ENCODE measurements at regions of chr3 and their contacts with region 1.

Region 1: GRCh38 chr3:30693470-30694120 is 87.2 kb downstream of the TGFBR2 start:
- DNase-seq: peak in 7 of 9 donors; percentile 63 to 79 (median 72)
- ATAC-seq: peak; percentile 94
- H3K4me3 ChIP-seq: no peak overlapping the region
- H3K4me3 Mint-ChIP-seq: peak overlapping the region in 3 of 10 donors; percentile 15 to 49 (median 37)
- H3K27ac ChIP-seq: no peak overlapping the region
- H3K27ac Mint-ChIP-seq: peak overlapping the region in 8 of 9 donors; percentile 33 to 98 (median 86)
- H3K4me1 ChIP-seq: peaks cover 11 to 30% of the 10 kb centered on the region in 2 donors
- H3K4me1 Mint-ChIP-seq: peaks cover 25 to 94% (median 85%) of the 10 kb centered on the region in 7 donors
- H3K27me3 ChIP-seq: no peaks in the 10 kb centered on the region
- H3K27me3 Mint-ChIP-seq: no peaks in the 10 kb centered on the region

Region 2: DNA sequence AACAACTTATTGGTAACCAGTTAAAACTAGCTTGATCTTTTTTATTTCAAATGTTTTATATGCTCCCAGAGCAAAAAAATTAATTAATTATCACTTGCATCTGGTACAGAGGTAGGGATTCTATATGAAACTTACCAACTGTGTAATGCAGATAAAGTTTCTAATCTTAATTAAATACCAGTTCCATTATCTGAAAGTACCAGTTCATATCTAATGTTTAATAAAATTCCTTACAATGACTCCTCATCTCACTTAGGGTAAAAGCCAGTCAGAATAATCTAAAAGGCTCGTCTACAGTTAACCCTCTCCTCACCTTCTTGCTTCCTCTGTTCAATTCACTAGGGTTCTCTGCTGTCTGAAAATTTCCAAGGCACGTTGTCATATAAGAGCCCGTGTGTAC is 1027.9 kb before region 1 on chr3:
- CTCF ChIA-PET with region 1: no interaction called
- POLR2A ChIA-PET with region 1: no interaction called
- intact Hi-C with region 1: no loop called
- DNase-seq: no peak
- ATAC-seq: no peak
- H3K4me3 ChIP-seq: no peak overlapping the region
- H3K4me3 Mint-ChIP-seq: no peak overlapping the region
- H3K27ac ChIP-seq: no peak overlapping the region
- H3K27ac Mint-ChIP-seq: no peak overlapping the region
- H3K4me1 ChIP-seq: no peaks in the 10 kb centered on the region
- H3K4me1 Mint-ChIP-seq: no peaks in the 10 kb centered on the region
- H3K27me3 ChIP-seq: no peaks in the 10 kb centered on the region
- H3K27me3 Mint-ChIP-seq: peaks cover 0 to 9% (median 3%) of the 10 kb centered on the region in 5 donors

Region 3: GRCh38 chr3:30073622-30074021 is 620.0 kb before region 1 on chr3:
- CTCF ChIA-PET with region 1: no interaction called
- POLR2A ChIA-PET with region 1: no interaction called
- intact Hi-C with region 1: no loop called
- DNase-seq: no peak
- ATAC-seq: no peak
- H3K4me3 ChIP-seq: no peak overlapping the region
- H3K4me3 Mint-ChIP-seq: no peak overlapping the region
- H3K27ac ChIP-seq: no peak overlapping the region
- H3K27ac Mint-ChIP-seq: no peak overlapping the region
- H3K4me1 ChIP-seq: no peaks in the 10 kb centered on the region
- H3K4me1 Mint-ChIP-seq: no peaks in the 10 kb centered on the region
- H3K27me3 ChIP-seq: no peaks in the 10 kb centered on the region
- H3K27me3 Mint-ChIP-seq: no peaks in the 10 kb centered on the region

Region 4: DNA sequence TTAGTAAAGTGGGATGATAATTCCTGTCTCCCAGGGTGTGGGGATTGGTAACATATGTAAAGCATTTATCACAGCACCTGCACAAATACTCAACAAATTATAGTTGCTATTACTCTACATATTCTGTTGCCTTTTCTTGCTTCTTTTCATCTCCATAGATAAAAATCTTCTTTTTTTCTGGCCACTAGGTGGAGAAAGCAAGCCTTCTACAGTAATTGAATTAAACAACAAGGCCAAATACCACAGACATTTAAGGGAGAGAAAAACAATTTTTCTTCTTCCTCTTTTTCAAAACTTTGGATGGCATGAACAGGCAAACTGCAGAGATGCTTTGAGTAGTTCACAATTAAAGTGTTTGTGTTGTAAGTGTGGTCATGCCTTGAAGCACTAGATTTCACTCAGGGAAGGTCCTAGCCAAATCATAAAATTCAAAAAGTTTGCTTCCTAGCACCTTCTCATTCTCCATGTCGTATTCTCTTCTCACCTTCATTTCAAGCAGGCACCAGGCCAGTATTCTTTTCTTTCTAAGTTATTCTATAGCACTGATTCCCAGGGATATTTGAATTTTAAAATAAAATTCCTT is 580.6 kb before region 1 on chr3:
- CTCF ChIA-PET with region 1: interaction called, 13 read pairs
- POLR2A ChIA-PET with region 1: interaction called, 3 read pairs
- intact Hi-C with region 1: loop called (anchors 1 kb)
- DNase-seq: peak in 7 of 9 donors; percentile 17 to 68 (median 55)
- ATAC-seq: peak; percentile 61
- H3K4me3 ChIP-seq: no peak overlapping the region
- H3K4me3 Mint-ChIP-seq: no peak overlapping the region
- H3K27ac ChIP-seq: no peak overlapping the region
- H3K27ac Mint-ChIP-seq: no peak overlapping the region
- H3K4me1 ChIP-seq: no peaks in the 10 kb centered on the region
- H3K4me1 Mint-ChIP-seq: peaks cover 4 to 8% (median 6%) of the 10 kb centered on the region in 7 donors
- H3K27me3 ChIP-seq: no peaks in the 10 kb centered on the region
- H3K27me3 Mint-ChIP-seq: peaks cover 0 to 16% (median 9%) of the 10 kb centered on the region in 5 donors

Region 5: GRCh38 chr3:30353711-30354467 is 339.7 kb before region 1 on chr3:
- CTCF ChIA-PET with region 1: no interaction called
- POLR2A ChIA-PET with region 1: interaction called, 4 read pairs
- intact Hi-C with region 1: loop called in 1 of 2 experiments (anchors 2 kb)
- DNase-seq: peak; percentile 5 to 94 (median 87)
- ATAC-seq: peak; percentile 99
- H3K4me3 ChIP-seq: peak overlapping the region; percentile 36
- H3K4me3 Mint-ChIP-seq: peak overlapping the region; percentile 65 to 81 (median 68)
- H3K27ac ChIP-seq: no peak overlapping the region
- H3K27ac Mint-ChIP-seq: peak overlapping the region; percentile 23 to 96 (median 90)
- H3K4me1 ChIP-seq: peaks cover 38 to 66% of the 10 kb centered on the region in 2 donors
- H3K4me1 Mint-ChIP-seq: peaks cover 50 to 96% (median 88%) of the 10 kb centered on the region in 7 donors
- H3K27me3 ChIP-seq: no peaks in the 10 kb centered on the region
- H3K27me3 Mint-ChIP-seq: peaks cover 0 to 50% (median 0%) of the 10 kb centered on the region in 5 donors

Region 6: DNA sequence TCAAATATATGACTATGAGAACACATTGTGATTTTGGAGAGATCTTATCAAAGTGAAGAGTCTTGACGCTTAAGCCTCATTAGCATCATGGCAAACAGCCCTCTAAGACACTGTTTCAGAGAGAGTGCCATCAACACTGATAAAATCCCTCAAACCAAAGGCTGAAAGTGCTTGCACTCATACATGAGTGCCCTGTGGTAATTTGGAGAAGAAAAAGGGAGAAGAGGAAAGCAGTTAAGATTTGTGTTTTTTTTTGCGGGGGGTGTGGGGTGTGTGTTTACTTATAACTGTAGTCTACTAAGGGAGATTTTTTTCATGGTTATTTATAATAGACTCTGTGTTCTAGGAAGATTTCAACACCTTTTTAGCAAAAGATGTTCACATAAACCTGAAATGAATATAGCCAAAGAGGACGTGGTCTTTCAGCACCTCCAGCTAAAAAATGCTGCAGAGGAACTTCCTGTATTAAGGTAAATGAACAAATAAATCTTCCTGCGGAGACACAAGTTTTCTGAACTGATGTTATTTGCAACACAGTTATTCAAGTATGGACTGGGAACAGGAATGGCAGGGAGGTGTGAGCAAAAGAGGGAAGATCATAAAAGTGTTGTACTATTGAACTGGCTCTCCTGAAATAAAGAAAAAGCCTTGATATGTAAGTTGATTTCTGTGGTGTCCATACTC is 169.1 kb before region 1 on chr3:
- CTCF ChIA-PET with region 1: interaction called, 3 read pairs
- POLR2A ChIA-PET with region 1: no interaction called
- intact Hi-C with region 1: loop called in 1 of 2 experiments (anchors 2 kb)
- DNase-seq: peak in 1 of 9 donors; percentile 4
- ATAC-seq: peak; percentile 41
- H3K4me3 ChIP-seq: no peak overlapping the region
- H3K4me3 Mint-ChIP-seq: peak overlapping the region in 9 of 10 donors; percentile 4 to 66 (median 48)
- H3K27ac ChIP-seq: no peak overlapping the region
- H3K27ac Mint-ChIP-seq: peak overlapping the region in 5 of 9 donors; percentile 0 to 63 (median 16)
- H3K4me1 ChIP-seq: no peaks in the 10 kb centered on the region
- H3K4me1 Mint-ChIP-seq: peaks cover 8 to 27% (median 23%) of the 10 kb centered on the region in 7 donors
- H3K27me3 ChIP-seq: no peaks in the 10 kb centered on the region
- H3K27me3 Mint-ChIP-seq: peaks cover 0 to 3% (median 0%) of the 10 kb centered on the region in 5 donors

Region 7: DNA sequence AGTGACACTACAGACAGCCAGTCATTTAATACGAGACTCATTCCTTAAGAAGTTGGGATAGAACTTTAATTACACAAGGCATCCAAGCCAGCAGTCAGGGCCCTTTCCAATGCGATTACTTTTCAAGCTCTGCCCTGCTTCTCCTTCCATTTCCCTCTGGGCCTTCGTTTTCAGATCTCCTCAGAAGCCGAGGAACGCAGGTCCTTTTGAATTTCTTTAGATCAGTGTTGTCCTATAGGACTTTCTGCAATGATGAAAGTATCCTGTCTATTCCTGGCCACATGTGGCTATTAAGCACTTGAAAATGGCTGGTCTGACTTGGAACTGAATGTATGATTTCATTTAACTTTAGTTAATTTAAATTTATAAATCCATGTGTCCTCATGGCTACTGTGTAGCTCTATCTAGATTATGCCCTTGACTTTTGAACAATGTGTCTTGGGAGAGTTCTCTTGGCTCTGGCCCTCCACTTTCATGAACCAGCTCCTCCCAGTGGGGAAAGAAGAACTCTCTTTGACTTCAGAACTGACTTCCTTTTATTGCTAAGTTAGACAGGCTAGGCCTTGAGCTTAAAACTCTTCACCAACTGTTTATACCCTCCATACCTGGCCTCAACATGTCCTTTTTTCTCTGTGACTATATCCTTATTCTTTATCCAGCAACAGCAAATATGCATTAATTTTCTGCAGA is 64.5 kb before region 1 on chr3:
- CTCF ChIA-PET with region 1: interaction called, 19 read pairs
- POLR2A ChIA-PET with region 1: no interaction called
- intact Hi-C with region 1: loop called (anchors 1 to 2 kb)
- DNase-seq: peak in 2 of 9 donors; percentile 53 to 55
- ATAC-seq: peak; percentile 51
- H3K4me3 ChIP-seq: peak overlapping the region; percentile 29
- H3K4me3 Mint-ChIP-seq: peak overlapping the region; percentile 53 to 88 (median 72)
- H3K27ac ChIP-seq: peak overlapping the region; percentile 68
- H3K27ac Mint-ChIP-seq: peak overlapping the region; percentile 84 to 98 (median 96)
- H3K4me1 ChIP-seq: peaks cover 81 to 97% of the 10 kb centered on the region in 2 donors
- H3K4me1 Mint-ChIP-seq: peaks cover 64 to 100% (median 93%) of the 10 kb centered on the region in 7 donors
- H3K27me3 ChIP-seq: no peaks in the 10 kb centered on the region
- H3K27me3 Mint-ChIP-seq: no peaks in the 10 kb centered on the region

Region 8: GRCh38 chr3:30681643-30682211 is 11.9 kb before region 1 on chr3:
- CTCF ChIA-PET with region 1: interaction called, 12 read pairs
- POLR2A ChIA-PET with region 1: interaction called, 11 read pairs
- intact Hi-C with region 1: loop called (anchors 1 kb)
- DNase-seq: peak in 2 of 9 donors; percentile 25 to 26
- ATAC-seq: peak; percentile 51
- H3K4me3 ChIP-seq: no peak overlapping the region
- H3K4me3 Mint-ChIP-seq: peak overlapping the region; percentile 39 to 88 (median 78)
- H3K27ac ChIP-seq: peak overlapping the region; percentile 52
- H3K27ac Mint-ChIP-seq: peak overlapping the region; percentile 62 to 98 (median 93)
- H3K4me1 ChIP-seq: peaks cover 32 to 84% of the 10 kb centered on the region in 2 donors
- H3K4me1 Mint-ChIP-seq: peaks cover 61 to 100% (median 93%) of the 10 kb centered on the region in 7 donors
- H3K27me3 ChIP-seq: no peaks in the 10 kb centered on the region
- H3K27me3 Mint-ChIP-seq: no peaks in the 10 kb centered on the region

Region 9: GRCh38 chr3:30768703-30769685 is 75.4 kb after region 1 on chr3:
- CTCF ChIA-PET with region 1: no interaction called
- POLR2A ChIA-PET with region 1: no interaction called
- intact Hi-C with region 1: no loop called
- DNase-seq: peak; percentile 39 to 69 (median 62)
- ATAC-seq: peak; percentile 48
- H3K4me3 ChIP-seq: no peak overlapping the region
- H3K4me3 Mint-ChIP-seq: peak overlapping the region in 1 of 10 donors; percentile 35
- H3K27ac ChIP-seq: no peak overlapping the region
- H3K27ac Mint-ChIP-seq: no peak overlapping the region
- H3K4me1 ChIP-seq: no peaks in the 10 kb centered on the region
- H3K4me1 Mint-ChIP-seq: peaks cover 0 to 7% (median 0%) of the 10 kb centered on the region in 7 donors
- H3K27me3 ChIP-seq: no peaks in the 10 kb centered on the region
- H3K27me3 Mint-ChIP-seq: peaks cover 0 to 32% (median 3%) of the 10 kb centered on the region in 5 donors

Region 10: GRCh38 chr3:32194653-32195052 is 1501.1 kb after region 1 on chr3:
- CTCF ChIA-PET with region 1: no interaction called
- POLR2A ChIA-PET with region 1: no interaction called
- intact Hi-C with region 1: no loop called
- DNase-seq: no peak
- ATAC-seq: no peak
- H3K4me3 ChIP-seq: no peak overlapping the region
- H3K4me3 Mint-ChIP-seq: no peak overlapping the region
- H3K27ac ChIP-seq: no peak overlapping the region
- H3K27ac Mint-ChIP-seq: no peak overlapping the region
- H3K4me1 ChIP-seq: no peaks in the 10 kb centered on the region
- H3K4me1 Mint-ChIP-seq: peaks cover 0 to 4% (median 0%) of the 10 kb centered on the region in 7 donors
- H3K27me3 ChIP-seq: no peaks in the 10 kb centered on the region
- H3K27me3 Mint-ChIP-seq: peaks cover under 1 to 24% (median 14%) of the 10 kb centered on the region in 5 donors